PC-9 (cell line): ENCODE measurements at regions of chr1 and their contacts with region 1.

Region 1: DNA sequence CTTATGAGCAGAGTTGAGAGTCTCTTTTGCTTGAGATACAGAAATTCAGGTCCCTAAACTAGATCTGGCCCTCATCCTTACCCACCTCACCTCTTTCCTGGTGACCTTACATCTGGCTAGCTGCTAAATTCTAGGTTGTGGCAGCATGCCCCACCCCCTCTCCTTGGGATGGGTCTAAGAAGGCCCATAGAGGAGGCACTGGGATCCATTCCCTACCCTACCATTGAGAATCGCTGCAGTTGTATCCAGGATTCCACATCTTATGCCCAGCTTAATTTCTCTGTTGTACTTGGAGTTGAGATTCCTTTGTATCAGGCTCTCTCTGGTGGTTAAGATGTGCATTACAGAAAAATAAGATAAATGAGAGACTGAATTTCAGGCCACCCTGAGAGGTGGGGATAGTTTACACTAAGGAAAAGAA is 9.5 kb upstream of the TMEM39B start:
- DNase-seq: no peak
- H3K4me3 ChIP-seq: no peak overlapping the region
- H3K27ac ChIP-seq: peak overlapping the region; percentile 21; the same call in 1 of the 2 replicates
- H3K4me1 ChIP-seq: peaks cover 24% of the 10 kb centered on the region
- H3K27me3 ChIP-seq: no peaks in the 10 kb centered on the region
- CTCF ChIP-seq: peak; percentile 77

Region 2: DNA sequence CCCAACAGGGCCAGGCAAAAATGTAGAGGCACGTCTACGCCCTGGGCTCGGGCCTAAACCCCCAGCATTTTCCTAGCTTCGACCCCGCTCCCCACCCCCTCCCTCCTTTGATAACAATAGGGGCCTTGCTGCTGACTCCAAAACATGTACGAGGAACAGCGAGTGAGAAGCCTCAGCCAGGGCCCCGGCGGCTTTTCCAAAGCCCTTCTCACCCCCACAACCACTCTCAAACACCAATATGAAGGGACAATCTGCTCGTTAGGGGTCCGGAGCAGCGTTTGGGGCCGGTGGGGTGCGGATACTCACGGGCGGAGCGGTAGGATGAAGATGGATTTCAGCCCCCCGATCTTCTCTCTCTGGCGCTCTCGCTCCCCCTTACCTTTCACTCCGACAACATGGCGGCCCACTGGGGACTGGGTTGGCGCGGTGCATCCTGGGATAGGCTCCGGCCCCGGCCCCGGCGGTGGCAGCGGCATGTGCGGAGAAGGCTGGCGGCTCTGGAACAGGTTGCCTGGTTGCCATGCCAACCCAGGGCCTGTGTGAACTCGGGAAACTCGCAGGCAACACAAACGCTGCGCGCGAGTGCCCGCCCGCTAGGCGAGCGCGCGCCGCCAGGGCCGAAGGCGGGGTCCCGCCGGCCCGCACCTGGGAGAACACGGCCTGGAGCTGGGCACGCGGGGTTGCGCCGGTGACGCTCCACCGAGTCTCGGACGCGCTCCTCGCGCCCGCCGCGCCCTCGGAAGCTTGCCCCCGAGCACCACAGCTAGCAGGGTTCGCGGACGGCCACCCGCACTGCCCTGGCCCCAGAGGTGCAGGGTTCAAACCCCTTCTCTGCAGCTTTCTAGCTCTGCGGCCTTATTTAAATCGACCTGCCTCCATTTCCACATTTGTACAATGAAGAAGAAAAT is 997.7 kb before region 1 on chr1 and contains the start of gene PUM1:
- CTCF ChIA-PET with region 1: no interaction called
- POLR2A ChIA-PET with region 1: interaction called, 12 read pairs
- intact Hi-C with region 1: no loop called
- DNase-seq: peak; percentile 89 to 99
- H3K4me3 ChIP-seq: peak within 1 kb of the TSS; percentile 85
- H3K27ac ChIP-seq: peak within 1 kb of the TSS; percentile 94
- H3K4me1 ChIP-seq: peaks cover 23% of the 10 kb centered on the region
- H3K27me3 ChIP-seq: no peaks in the 10 kb centered on the region
- CTCF ChIP-seq: no peak
- total RNA-seq, gene PUM1: 99.2 and 117 TPM in 2 replicates

Region 3: DNA sequence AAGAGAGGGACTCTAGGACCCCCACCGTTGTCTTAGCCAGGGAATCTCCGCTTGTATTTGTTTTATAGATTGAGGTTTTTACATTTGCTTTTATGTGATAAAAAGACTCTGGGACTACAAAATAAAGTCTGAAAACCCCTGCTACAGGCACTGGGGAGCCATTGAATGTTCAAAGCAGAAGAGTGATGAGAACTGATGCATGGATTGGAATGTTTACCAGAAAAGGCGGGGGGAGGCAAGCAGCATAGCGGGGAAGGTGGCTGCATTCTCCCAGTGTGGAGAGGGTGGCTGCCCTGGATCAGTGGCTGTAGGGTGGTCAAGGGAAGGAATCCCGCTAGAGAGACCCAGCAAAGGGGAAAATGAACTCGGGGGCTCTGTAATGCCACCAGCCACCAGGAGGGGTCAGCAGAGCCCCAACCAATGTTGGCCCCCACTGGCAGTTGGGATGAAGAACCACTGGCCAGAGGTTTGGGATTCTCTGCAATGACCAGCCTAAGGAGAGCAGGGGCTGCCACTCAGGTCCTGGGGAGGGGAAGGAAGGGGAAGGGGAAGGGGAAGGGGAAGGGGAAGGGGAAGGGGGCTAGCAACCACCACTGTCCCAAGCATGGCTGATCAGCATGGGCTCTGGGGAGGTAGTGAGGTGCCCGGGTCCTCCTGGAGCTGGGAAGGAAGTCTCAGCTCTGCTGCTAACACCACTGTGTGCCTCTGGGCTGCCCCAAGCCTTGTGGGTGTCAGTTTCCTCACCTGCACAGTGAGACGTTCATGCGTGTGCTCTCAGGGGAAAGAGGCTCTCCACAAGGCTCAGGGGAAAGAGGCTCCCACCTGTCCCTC is 399.4 kb before region 1 on chr1:
- CTCF ChIA-PET with region 1: no interaction called
- POLR2A ChIA-PET with region 1: no interaction called
- intact Hi-C with region 1: loop called (anchors 10 kb)
- DNase-seq: peak in 1 of 2 experiments; percentile 67
- H3K4me3 ChIP-seq: no peak overlapping the region
- H3K27ac ChIP-seq: no peak overlapping the region
- H3K4me1 ChIP-seq: peaks cover 18% of the 10 kb centered on the region
- H3K27me3 ChIP-seq: no peaks in the 10 kb centered on the region
- CTCF ChIP-seq: peak; percentile 100

Region 4: DNA sequence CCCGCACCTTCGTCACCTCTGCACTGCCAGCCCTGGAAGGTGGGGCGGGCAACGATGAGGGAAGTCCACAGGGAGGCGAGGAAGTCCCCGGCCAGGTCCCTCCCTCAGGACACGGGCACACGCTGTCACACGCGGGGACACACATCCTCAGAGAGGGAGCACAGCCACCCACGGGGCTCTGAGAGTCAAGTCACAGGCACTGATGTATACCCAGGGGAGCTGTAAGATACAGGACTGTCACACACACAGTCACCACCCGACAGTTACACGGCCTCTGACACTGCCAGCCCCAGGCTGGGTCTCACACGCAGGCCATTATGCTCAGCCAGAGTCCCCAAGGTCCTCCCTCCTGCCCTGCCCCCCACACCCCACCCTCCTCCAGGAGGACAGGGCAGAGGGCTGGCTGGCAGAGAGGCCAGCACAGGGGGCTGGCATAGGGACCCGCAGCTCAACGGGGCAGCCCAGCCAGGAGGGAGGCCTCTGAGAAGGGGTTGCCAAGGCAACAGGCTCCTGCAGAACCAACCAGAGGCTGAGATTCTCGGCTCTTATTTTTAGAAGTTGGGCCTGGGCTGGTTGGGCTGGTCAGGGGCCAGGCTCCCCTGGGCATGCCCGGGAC is 281.4 kb before region 1 on chr1:
- CTCF ChIA-PET with region 1: no interaction called
- POLR2A ChIA-PET with region 1: no interaction called
- intact Hi-C with region 1: no loop called
- DNase-seq: no peak
- H3K4me3 ChIP-seq: no peak overlapping the region
- H3K27ac ChIP-seq: no peak overlapping the region
- H3K4me1 ChIP-seq: no peaks in the 10 kb centered on the region
- H3K27me3 ChIP-seq: no peaks in the 10 kb centered on the region
- CTCF ChIP-seq: no peak

Region 5: GRCh38 chr1:31880890-31881687 is 182.2 kb before region 1 on chr1:
- CTCF ChIA-PET with region 1: no interaction called
- POLR2A ChIA-PET with region 1: interaction called, 10 read pairs
- intact Hi-C with region 1: no loop called
- DNase-seq: no peak
- H3K4me3 ChIP-seq: no peak overlapping the region
- H3K27ac ChIP-seq: no peak overlapping the region
- H3K4me1 ChIP-seq: no peaks in the 10 kb centered on the region
- H3K27me3 ChIP-seq: no peaks in the 10 kb centered on the region
- CTCF ChIP-seq: no peak

Region 6: DNA sequence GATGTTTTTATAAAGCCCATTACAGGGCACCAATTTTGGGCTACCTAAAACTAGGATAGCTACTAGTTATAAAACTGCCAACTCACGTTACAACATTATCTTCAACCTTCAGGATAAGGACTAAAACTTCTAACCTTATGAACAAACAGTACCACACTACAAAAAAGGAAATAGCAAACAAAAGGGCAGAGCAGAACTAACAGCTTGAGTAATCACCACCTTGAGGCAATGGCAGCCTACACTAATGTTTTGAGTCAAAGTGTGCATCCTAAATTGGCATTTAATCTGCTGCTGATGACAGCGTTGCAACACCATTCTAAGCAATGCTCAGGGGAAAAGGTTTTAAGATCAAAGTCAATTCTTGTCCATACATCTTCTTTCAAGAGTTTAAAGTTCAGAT is 152.3 kb before region 1 on chr1:
- CTCF ChIA-PET with region 1: no interaction called
- POLR2A ChIA-PET with region 1: interaction called, 21 read pairs
- intact Hi-C with region 1: no loop called
- DNase-seq: no peak
- H3K4me3 ChIP-seq: no peak overlapping the region
- H3K27ac ChIP-seq: peak overlapping the region; percentile 9; the same call in 1 of the 2 replicates
- H3K4me1 ChIP-seq: peaks cover 21% of the 10 kb centered on the region; the same call in 1 of the 2 replicates
- H3K27me3 ChIP-seq: no peaks in the 10 kb centered on the region
- CTCF ChIP-seq: no peak

Region 7: DNA sequence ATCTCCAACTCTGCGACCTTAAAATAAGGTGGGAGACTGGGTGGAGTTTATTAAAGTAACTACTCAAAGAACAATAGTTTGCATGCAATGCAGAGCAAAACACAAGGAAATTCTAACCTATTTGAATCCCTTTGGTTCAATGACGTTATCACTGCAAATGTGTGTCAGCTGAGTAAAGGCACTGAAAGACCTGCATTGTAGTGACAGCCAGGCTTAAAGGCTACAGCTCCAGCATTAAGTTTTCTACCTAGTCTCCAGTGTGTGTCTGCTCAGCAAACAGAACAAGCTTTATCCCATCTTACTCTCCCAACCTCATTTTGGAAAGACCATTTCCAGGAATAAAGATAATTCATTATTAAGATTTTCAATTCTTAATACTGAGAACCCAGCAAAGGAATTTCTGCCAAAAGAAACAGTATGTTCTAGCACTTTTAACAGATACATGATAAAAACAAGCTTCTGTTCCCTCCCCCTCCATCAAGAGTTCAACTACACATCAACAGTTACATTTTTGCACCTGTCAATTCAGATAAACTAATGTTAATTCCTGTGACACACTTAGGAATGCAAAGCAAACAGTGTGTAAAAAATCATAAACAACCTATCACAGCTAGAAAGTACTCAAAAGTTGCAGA is 139.3 kb before region 1 on chr1:
- CTCF ChIA-PET with region 1: no interaction called
- POLR2A ChIA-PET with region 1: interaction called, 16 read pairs
- intact Hi-C with region 1: no loop called
- DNase-seq: no peak
- H3K4me3 ChIP-seq: no peak overlapping the region
- H3K27ac ChIP-seq: peak overlapping the region; percentile 8; the same call in 1 of the 2 replicates
- H3K4me1 ChIP-seq: peaks cover 78% of the 10 kb centered on the region
- H3K27me3 ChIP-seq: no peaks in the 10 kb centered on the region
- CTCF ChIP-seq: no peak

Region 8: DNA sequence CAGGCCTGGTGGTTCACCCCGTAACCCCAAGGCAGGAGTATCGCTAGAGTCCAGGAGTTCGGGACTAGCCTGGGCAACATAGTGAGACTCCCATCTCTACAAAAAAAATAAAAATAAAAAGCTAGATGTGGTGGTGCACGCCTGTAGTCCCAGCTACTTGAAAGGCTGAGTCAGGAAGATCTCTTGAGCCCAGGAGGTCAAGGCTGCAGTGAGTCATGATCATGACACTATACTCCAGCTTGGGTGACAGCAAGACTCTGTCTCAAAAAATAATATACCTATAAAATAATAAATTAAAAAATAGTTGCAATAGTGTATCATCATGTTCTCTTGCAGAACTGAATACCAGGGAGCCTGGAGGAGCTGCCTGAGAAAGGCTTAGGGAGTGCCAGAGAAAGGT is 10.4 kb before region 1 on chr1:
- CTCF ChIA-PET with region 1: interaction called, 13 read pairs
- POLR2A ChIA-PET with region 1: no interaction called
- intact Hi-C with region 1: no loop called
- DNase-seq: peak in 1 of 2 experiments; percentile 10
- H3K4me3 ChIP-seq: no peak overlapping the region
- H3K27ac ChIP-seq: no peak overlapping the region
- H3K4me1 ChIP-seq: no peaks in the 10 kb centered on the region
- H3K27me3 ChIP-seq: no peaks in the 10 kb centered on the region
- CTCF ChIP-seq: no peak